ENCODE measurements at regions of chr5 and their contacts with region 1.

Region 1: DNA sequence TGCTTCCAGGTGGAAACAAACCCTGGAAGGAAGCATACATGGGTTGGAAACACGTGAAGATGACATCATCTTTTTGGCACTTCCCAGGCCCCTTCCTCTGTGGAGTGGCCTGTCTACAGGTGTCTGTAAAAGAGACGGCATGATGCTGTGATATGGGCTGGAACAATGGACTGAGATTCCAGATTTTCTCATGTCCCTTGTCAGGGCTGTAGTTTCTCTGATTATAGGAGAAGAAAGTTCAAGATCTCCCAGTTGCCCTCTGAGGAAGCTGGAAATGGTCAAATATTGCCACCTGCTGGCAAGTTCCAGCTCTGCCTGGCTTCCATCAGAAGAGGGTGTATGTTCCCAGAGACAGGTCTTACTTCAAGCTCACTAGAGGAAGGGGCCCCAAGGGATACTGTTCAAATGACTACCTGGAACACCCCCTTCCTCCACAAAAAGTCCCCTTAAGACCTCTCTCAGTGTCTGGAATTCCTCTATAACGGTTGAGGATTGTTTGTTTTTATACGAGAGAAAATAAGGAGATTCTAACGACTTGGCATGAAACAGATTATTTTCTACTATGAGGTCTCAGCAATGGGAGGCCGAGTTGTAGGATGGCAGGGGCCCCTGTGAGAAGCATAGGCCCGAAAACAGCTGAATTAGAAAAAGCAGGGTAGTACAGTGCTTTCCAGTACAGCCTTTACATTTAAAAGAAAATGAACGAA is 7.3 kb upstream of the ANXA6 start:
- DNase-seq: peak; percentile 89
- ATAC-seq: peak; percentile 97
- H3K4me3 Mint-ChIP-seq: no peak overlapping the region
- H3K27ac Mint-ChIP-seq: no peak overlapping the region
- H3K4me1 Mint-ChIP-seq: peaks cover 17% of the 10 kb centered on the region
- H3K27me3 Mint-ChIP-seq: no peaks in the 10 kb centered on the region
- CTCF ChIP-seq: peak; percentile 92

Region 2: GRCh38 chr5:151051066-151051930 is 113.5 kb before region 1 on chr5:
- CTCF ChIA-PET with region 1: interaction called, 64 read pairs
- POLR2A ChIA-PET with region 1: interaction called, 4 read pairs
- intact Hi-C with region 1: no loop called
- DNase-seq: peak; percentile 88
- ATAC-seq: peak; percentile 83
- H3K4me3 Mint-ChIP-seq: no peak overlapping the region
- H3K27ac Mint-ChIP-seq: peak overlapping the region; percentile 36
- H3K4me1 Mint-ChIP-seq: peaks cover 12% of the 10 kb centered on the region
- H3K27me3 Mint-ChIP-seq: no peaks in the 10 kb centered on the region
- CTCF ChIP-seq: peak; percentile 75

Region 3: DNA sequence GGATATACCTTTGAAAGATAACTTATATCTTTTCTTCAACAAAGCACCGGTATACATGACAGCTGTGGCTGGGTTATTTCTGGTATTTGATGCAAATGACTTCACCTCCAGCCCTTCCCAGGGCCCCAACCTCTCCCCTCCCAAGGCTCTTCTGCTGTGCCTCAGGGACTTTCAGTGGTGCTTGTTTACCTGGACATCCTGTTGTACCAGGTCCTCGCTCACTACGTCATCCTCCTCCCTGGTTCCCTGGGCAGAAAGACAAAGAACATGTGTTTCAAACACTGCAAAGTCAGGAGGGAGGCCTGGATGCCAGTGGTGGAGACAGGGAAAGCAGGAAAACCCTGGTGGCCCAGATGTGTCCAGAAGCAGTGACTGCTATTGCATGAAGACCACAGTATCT is 30.6 kb before region 1 on chr5:
- CTCF ChIA-PET with region 1: interaction called, 413 read pairs
- POLR2A ChIA-PET with region 1: interaction called, 3 read pairs
- intact Hi-C with region 1: no loop called
- DNase-seq: no peak
- ATAC-seq: no peak
- H3K4me3 Mint-ChIP-seq: no peak overlapping the region
- H3K27ac Mint-ChIP-seq: no peak overlapping the region
- H3K4me1 Mint-ChIP-seq: peaks cover 56% of the 10 kb centered on the region
- H3K27me3 Mint-ChIP-seq: no peaks in the 10 kb centered on the region
- CTCF ChIP-seq: no peak

Region 4: GRCh38 chr5:151150471-151151262 is 14.2 kb before region 1 on chr5:
- CTCF ChIA-PET with region 1: interaction called, 57 read pairs
- POLR2A ChIA-PET with region 1: interaction called, 4 read pairs
- intact Hi-C with region 1: no loop called
- DNase-seq: peak; percentile 90
- ATAC-seq: peak; percentile 63
- H3K4me3 Mint-ChIP-seq: peak overlapping the region; percentile 49
- H3K27ac Mint-ChIP-seq: peak overlapping the region; percentile 89
- H3K4me1 Mint-ChIP-seq: peaks cover 92% of the 10 kb centered on the region
- H3K27me3 Mint-ChIP-seq: no peaks in the 10 kb centered on the region
- CTCF ChIP-seq: no peak

Region 5: GRCh38 chr5:151213800-151214613 is 49.2 kb after region 1 on chr5:
- CTCF ChIA-PET with region 1: interaction called, 17 read pairs
- POLR2A ChIA-PET with region 1: no interaction called
- intact Hi-C with region 1: no loop called
- DNase-seq: peak; percentile 94
- ATAC-seq: peak; percentile 86
- H3K4me3 Mint-ChIP-seq: peak overlapping the region; percentile 88
- H3K27ac Mint-ChIP-seq: peak overlapping the region; percentile 99
- H3K4me1 Mint-ChIP-seq: peaks cover 75% of the 10 kb centered on the region
- H3K27me3 Mint-ChIP-seq: no peaks in the 10 kb centered on the region
- CTCF ChIP-seq: no peak

Region 6: DNA sequence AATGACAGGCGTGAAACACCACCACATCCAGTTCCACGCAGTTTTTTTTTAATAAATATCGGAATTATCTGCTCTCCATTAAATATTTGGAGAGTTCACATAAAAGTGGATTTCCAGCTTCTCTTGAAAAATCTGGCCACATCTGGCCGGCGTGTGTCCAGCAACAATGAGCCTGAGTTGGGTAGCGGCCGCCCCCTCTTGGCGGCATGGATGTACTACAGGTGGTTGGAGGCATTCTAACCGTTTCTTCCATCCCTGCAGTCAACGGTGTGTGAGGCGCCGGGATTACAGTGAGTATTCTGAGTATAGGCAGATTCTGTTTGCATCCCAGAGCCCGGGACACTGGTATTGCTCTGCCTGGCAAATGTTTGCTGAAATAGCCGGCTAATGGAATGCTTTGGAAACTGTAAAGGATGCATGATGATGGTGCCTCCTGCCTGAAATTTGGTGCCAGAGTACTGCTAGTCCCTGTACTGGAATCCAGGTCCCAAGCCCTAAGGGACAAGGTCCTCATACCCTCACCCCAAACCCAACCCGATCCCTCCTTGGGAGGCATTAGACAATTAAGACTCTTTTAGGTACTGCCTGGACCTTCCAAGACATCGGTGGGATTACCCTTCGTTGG is 74.5 kb after region 1 on chr5:
- CTCF ChIA-PET with region 1: interaction called, 65 read pairs
- POLR2A ChIA-PET with region 1: no interaction called
- intact Hi-C with region 1: no loop called
- DNase-seq: peak; percentile 78
- ATAC-seq: peak; percentile 85
- H3K4me3 Mint-ChIP-seq: peak overlapping the region; percentile 21
- H3K27ac Mint-ChIP-seq: peak overlapping the region; percentile 13
- H3K4me1 Mint-ChIP-seq: peaks cover 37% of the 10 kb centered on the region
- H3K27me3 Mint-ChIP-seq: no peaks in the 10 kb centered on the region
- CTCF ChIP-seq: peak; percentile 98

Region 7: DNA sequence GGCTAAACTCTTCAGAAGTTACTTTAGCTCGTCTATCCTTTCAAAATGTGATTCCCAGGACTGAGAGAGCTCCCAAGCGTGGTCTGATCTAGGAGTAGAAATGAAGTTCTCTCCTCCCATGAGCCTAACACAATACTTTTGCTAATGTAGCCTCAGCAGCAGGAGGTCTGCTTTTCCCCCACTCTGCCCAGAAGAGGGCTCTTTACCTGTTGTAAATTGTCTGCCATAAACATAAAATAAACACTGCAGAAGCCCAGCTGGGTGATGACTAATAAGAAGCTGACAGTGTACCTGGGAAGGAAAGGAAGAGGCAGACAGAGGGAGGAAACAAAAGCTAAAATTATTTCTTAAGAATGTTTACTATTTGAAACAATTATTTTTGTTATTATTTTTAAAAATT is 123.3 kb after region 1 on chr5:
- CTCF ChIA-PET with region 1: no interaction called
- POLR2A ChIA-PET with region 1: no interaction called
- intact Hi-C with region 1: no loop called
- DNase-seq: no peak
- ATAC-seq: peak; percentile 34
- H3K4me3 Mint-ChIP-seq: no peak overlapping the region
- H3K27ac Mint-ChIP-seq: no peak overlapping the region
- H3K4me1 Mint-ChIP-seq: no peaks in the 10 kb centered on the region
- H3K27me3 Mint-ChIP-seq: peaks cover under 1% of the 10 kb centered on the region
- CTCF ChIP-seq: no peak

Measured in activated CD8-positive, alpha-beta T cell treated with anti-CD3 and anti-CD28 coated beads for 36 hours (primary cell).